ENCODE measurements at regions of chr12 and their contacts with region 1.

Region 1: GRCh38 chr12:51381226-51382079 is 9.8 kb downstream of the GALNT6 start:
- DNase-seq: no peak
- H3K4me3 Mint-ChIP-seq: no peak overlapping the region
- H3K27ac Mint-ChIP-seq: no peak overlapping the region
- H3K4me1 Mint-ChIP-seq: peaks cover 15% of the 10 kb centered on the region
- H3K27me3 Mint-ChIP-seq: no peaks in the 10 kb centered on the region
- CTCF ChIP-seq: no peak

Region 2: DNA sequence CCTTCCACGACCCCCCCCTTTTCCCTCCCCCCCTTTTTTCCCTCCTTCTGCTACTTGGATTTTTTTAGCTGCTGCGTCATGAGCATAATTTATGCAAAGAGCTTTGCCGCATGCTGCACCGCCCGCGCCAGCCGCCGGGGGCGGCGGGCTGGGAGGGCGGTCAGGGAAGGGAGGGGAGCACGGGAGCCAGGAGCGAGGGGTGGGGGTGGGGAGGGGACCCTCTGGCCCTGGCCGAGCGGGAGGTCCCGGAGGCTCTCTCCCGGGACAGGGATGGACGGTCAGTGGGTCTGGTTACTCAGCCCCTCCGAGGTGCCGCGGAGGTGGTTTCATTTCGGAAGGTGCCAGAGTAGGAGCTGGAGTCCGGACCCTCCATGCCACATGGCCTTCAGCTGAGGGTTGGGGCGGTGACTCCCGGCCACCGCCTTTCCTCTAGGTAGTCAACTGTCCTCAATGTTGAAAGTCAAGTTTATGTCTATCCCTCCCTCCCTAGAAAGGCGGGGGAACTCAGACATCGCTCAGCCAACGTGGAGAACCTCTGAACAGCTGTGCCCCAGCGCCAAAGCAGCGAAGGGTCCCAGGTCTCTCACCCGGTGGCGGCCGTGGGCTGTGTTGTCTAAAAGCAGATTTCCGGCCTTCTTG is 163.4 kb before region 1 on chr12 and contains the start of gene POU6F1:
- CTCF ChIA-PET with region 1: no interaction called
- POLR2A ChIA-PET with region 1: no interaction called
- intact Hi-C with region 1: no loop called
- DNase-seq: peak; percentile 72
- H3K4me3 Mint-ChIP-seq: peak within 1 kb of the TSS; percentile 74
- H3K27ac Mint-ChIP-seq: peak within 1 kb of the TSS; percentile 85
- H3K4me1 Mint-ChIP-seq: peaks cover 6% of the 10 kb centered on the region
- H3K27me3 Mint-ChIP-seq: no peaks in the 10 kb centered on the region
- CTCF ChIP-seq: peak; percentile 65
- total RNA-seq, gene POU6F1: 3.0 and 3.8 TPM in 2 replicates

Region 3: DNA sequence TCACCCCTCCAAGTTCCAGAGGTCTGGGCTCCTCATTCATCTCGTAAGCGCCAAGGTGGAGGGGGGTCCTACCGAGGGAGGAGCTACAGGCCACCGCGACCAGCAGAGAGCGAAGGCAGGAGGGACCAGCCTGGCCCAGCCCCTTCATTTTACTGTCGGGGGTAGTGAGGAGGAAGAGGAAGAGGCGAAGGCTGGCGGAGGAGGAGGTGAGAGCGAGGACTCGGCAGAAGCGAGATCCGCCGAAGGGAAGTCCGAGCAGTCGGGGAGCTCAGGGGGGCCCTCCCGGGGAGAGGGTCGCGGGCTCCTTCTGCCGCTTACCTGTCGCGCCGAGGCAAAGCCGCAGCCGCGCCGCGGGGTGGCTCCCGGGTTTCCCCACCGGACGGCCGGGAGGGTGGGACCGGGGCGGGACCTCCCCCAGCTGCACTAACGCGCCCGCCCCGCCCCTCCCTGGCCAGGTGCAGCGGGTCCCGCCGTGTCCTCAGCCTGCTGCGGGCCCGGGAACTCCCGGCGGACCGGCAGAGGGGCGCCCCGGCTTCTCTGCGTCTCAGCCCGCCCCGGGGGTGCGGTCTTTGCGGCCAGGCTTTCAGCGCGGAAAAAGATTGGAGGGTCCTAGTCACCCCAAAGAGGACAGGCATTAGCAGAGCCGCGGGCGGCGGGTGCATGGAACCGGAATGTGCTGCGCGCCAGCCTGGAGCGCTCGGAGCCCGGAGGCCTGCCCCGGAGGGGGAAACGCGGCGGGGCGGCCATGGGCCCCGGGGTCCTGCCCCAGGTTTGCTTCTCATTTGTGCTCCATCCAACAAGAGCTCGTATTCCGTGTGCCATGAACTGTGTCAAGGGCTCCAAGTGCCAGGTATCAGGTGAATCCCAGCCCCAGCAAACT is 10.1 kb after region 1 on chr12 and contains the start of gene GALNT6:
- CTCF ChIA-PET with region 1: no interaction called
- POLR2A ChIA-PET with region 1: interaction called, 13 read pairs
- intact Hi-C with region 1: no loop called
- DNase-seq: peak; percentile 58
- H3K4me3 Mint-ChIP-seq: peak within 1 kb of the TSS; percentile 95
- H3K27ac Mint-ChIP-seq: peak within 1 kb of the TSS; percentile 95
- H3K4me1 Mint-ChIP-seq: peaks cover 57% of the 10 kb centered on the region
- H3K27me3 Mint-ChIP-seq: no peaks in the 10 kb centered on the region
- CTCF ChIP-seq: no peak
- total RNA-seq, gene GALNT6: 24.8 and 27.6 TPM in 2 replicates